A549 (cell line): ENCODE measurements at regions of chr2 and their contacts with region 1.

Region 1: GRCh38 chr2:72940786-72941185 is 23.5 kb downstream of the EMX1 start:
- DNase-seq: no peak
- ATAC-seq: no peak
- H3K4me3 ChIP-seq: no peak overlapping the region
- H3K27ac ChIP-seq: no peak overlapping the region
- H3K4me1 ChIP-seq: no peaks in the 10 kb centered on the region
- CTCF ChIP-seq: no peak
- EP300 ChIP-seq: no peak
- POLR2A ChIP-seq: no peak
- RAD21 ChIP-seq: no peak

Region 2: GRCh38 chr2:72630767-72631166 is 310.0 kb before region 1 on chr2:
- CTCF ChIA-PET with region 1: no interaction called
- POLR2A ChIA-PET with region 1: no interaction called
- DNase-seq: peak in 1 of 2 experiments; percentile 71
- ATAC-seq: peak; percentile 43 to 61; a peak in 3 of 6 replicates
- H3K4me3 ChIP-seq: no peak overlapping the region
- H3K27ac ChIP-seq: peak overlapping the region in 1 of 2 experiments; percentile 47; a peak in 3 of 6 replicates
- H3K4me1 ChIP-seq: peaks cover 28% of the 10 kb centered on the region
- CTCF ChIP-seq: no peak
- EP300 ChIP-seq: no peak
- POLR2A ChIP-seq: no peak
- RAD21 ChIP-seq: no peak

Region 3: DNA sequence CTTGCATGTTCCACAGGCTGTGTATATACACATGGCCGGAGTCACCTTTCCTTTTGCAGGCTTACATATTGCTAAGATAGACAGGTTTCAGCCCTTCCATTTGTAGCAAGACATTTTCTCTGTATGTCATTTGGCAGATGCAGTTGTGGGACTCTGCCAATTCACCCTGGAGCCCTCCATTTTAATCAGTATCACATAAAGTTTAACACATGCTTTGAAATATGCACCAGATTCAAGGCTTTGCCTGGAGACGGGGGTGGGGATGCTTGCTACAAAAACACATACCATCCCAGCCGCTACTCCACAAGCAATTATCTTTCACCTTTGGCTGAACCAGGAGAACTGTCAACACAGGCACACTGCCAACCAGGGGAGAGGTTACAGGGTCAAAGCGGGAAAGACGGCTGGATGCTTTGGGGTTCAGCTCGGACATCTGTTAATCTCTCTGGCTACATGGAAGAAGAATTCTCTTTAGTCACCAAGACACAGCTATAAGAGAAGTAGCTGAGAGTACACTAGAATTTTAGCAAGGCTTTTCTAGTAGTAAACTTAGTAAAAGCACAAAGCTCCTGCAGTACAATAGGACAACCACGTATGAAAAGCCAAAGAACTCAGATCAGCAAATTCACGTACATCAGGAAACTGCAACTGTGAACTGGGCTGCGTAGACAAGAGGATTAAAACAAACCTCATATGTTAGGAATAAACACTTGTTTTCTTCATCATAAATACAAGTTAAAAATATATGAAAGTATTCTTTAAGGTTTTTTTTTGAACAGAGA is 245.9 kb before region 1 on chr2:
- CTCF ChIA-PET with region 1: no interaction called
- POLR2A ChIA-PET with region 1: no interaction called
- DNase-seq: peak in 1 of 2 experiments; percentile 50
- ATAC-seq: peak; percentile 19 to 76; a peak in 4 of 6 replicates
- H3K4me3 ChIP-seq: no peak overlapping the region
- H3K27ac ChIP-seq: peak overlapping the region in 1 of 2 experiments; percentile 36; a peak in 4 of 6 replicates
- H3K4me1 ChIP-seq: peaks cover 26% of the 10 kb centered on the region
- CTCF ChIP-seq: no peak
- EP300 ChIP-seq: no peak
- POLR2A ChIP-seq: no peak
- RAD21 ChIP-seq: no peak; a peak in 1 of 5 replicates

Region 4: GRCh38 chr2:72924353-72925240 is 16.2 kb before region 1 on chr2:
- CTCF ChIA-PET with region 1: interaction called, 10 read pairs
- POLR2A ChIA-PET with region 1: no interaction called
- DNase-seq: no peak
- ATAC-seq: peak; percentile 6 to 36; a peak in 3 of 6 replicates
- H3K4me3 ChIP-seq: no peak overlapping the region
- H3K27ac ChIP-seq: no peak overlapping the region
- H3K4me1 ChIP-seq: peaks cover 5% of the 10 kb centered on the region; the same call in 1 of the 3 replicates
- CTCF ChIP-seq: no peak
- EP300 ChIP-seq: no peak
- POLR2A ChIP-seq: no peak
- RAD21 ChIP-seq: no peak

Region 5: GRCh38 chr2:73112913-73113633 is 172.3 kb after region 1 on chr2 and contains the start of gene RAB11FIP5:
- CTCF ChIA-PET with region 1: no interaction called
- POLR2A ChIA-PET with region 1: no interaction called
- DNase-seq: peak; percentile 67 to 81
- ATAC-seq: peak; percentile 77 to 88
- H3K4me3 ChIP-seq: peak within 1 kb of the TSS; percentile 91
- H3K27ac ChIP-seq: peak within 1 kb of the TSS; percentile 86 to 92
- H3K4me1 ChIP-seq: peaks cover 20% of the 10 kb centered on the region
- CTCF ChIP-seq: no peak
- EP300 ChIP-seq: no peak
- POLR2A ChIP-seq: peak; percentile 23; the same call in 1 of the 2 replicates
- RAD21 ChIP-seq: no peak; a peak in 1 of 5 replicates
- polyA plus RNA-seq, gene RAB11FIP5: 21.6 and 30.8 TPM in 2 replicates

Region 6: DNA sequence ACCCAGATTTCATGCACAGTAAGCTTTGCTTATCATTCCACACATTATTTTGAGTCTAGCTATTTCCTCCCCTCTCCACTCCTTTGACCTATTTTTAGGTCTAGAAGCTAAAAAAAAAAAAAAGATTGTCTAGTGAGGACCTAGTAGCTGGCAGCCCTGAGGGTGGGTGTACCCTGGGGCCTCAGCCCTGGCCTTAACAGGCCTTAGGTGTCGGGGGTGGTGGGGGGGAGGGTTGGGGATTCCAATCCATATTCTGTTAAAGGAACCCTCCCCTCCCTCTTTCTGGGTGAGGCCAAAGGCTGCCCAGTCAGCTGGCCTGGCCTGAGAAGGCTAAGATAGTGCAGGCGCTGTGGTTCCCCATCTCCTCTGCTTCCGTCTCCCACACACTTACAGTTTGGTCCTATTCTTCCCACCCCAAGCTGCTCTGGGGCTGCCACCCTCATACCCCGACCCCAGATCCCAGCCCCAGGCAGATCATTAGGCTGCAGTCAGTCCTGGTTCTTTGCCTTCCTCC is 1827.7 kb after region 1 on chr2:
- CTCF ChIA-PET with region 1: no interaction called
- POLR2A ChIA-PET with region 1: no interaction called
- DNase-seq: no peak
- ATAC-seq: no peak
- H3K4me3 ChIP-seq: no peak overlapping the region
- H3K27ac ChIP-seq: no peak overlapping the region
- H3K4me1 ChIP-seq: 0 out of 3 replicates have a peak, but pooled peaks cover 3% of the 10 kb centered on the region
- CTCF ChIP-seq: no peak
- EP300 ChIP-seq: no peak
- POLR2A ChIP-seq: no peak
- RAD21 ChIP-seq: no peak